GM23248 (cell line): ENCODE measurements at regions of chr1 and their contacts with region 1.

Region 1: GRCh38 chr1:15430787-15431570 is 7.3 kb upstream of the CTRC start:
- DNase-seq: peak; percentile 46
- H3K4me3 ChIP-seq: no peak overlapping the region
- H3K27ac ChIP-seq: no peak overlapping the region
- H3K4me1 ChIP-seq: peaks cover 10% of the 10 kb centered on the region
- H3K27me3 ChIP-seq: no peaks in the 10 kb centered on the region

Region 2: GRCh38 chr1:14778898-14779865 is 651.8 kb before region 1 on chr1:
- in situ Hi-C with region 1: no loop called
- DNase-seq: peak; percentile 48
- H3K4me3 ChIP-seq: no peak overlapping the region
- H3K27ac ChIP-seq: no peak overlapping the region
- H3K4me1 ChIP-seq: peaks cover 12% of the 10 kb centered on the region; the same call in 1 of the 2 replicates
- H3K27me3 ChIP-seq: 0 out of 2 replicates have a peak, but pooled peaks cover 5% of the 10 kb centered on the region

Region 3: DNA sequence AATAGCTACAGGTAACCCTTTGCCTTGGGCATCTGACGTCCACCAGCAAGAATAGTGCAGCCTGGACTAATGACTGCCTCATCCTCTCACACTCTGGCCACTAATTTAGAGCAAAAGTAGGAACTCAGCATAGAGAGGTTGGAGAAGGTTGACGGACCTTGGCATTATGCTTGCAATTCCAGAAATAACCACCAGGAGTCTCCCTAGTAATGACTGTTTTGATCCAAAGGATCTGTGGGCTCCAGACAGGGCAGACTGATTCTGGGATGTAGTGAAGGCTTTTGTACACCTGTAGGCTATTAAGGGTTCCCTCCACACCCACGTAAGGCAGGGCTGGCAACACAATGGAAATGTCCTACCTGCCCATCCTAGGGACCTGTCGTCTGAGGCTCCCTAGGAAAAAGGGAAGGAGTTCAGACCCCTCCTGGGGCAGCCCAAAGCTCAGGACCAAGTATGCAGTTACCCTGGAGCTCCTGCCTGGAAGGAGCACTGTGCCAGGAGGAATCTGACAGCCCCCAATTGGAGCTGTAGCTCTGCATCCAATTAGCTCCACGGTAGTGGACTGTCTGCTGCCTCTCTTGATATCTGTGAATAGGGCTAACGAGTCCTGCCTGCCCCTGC is 368.4 kb before region 1 on chr1:
- in situ Hi-C with region 1: no loop called
- DNase-seq: no peak
- H3K4me3 ChIP-seq: no peak overlapping the region
- H3K27ac ChIP-seq: no peak overlapping the region
- H3K4me1 ChIP-seq: no peaks in the 10 kb centered on the region
- H3K27me3 ChIP-seq: no peaks in the 10 kb centered on the region

Region 4: DNA sequence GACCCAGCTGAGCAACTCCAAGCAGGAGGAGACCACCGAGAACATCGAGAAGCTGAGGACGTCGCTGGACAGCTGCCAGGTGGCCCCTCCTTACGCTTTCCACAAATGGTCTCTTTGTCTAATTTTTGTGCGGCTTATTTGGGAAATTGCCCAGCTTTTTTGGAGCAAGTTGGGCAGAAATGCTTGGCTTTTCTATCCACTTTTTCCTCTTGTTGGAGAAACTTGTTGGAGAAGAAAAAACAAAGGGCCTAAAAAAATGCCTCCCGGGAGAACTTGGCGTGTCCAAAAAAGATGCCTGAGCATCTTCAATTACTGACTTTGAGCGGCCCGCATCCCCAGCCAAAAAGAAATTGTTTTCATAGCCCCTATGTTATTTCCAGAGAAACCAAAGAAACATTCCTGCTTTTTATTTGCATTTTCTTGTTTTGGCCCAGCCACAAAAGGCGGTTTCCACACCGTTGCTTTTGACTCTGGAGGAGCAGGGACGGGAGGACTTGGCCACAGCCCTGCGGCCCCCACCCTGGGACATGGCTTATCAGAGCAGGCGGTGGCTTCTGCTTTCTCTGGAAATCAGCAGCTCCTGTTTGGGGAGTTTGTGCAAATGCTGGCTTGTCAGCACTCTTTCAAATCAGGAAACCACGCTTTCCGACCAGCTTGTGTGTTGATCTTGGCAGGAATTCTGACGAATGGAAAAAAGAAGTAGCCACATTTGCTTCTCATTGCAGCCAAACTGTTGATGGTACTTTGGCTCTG is 102.5 kb before region 1 on chr1:
- in situ Hi-C with region 1: loop called (anchors 5 kb)
- DNase-seq: peak; percentile 76
- H3K4me3 ChIP-seq: peak overlapping the region; percentile 36
- H3K27ac ChIP-seq: no peak overlapping the region
- H3K4me1 ChIP-seq: peaks cover 24% of the 10 kb centered on the region
- H3K27me3 ChIP-seq: no peaks in the 10 kb centered on the region

Region 5: GRCh38 chr1:15384301-15384901 is 46.6 kb before region 1 on chr1:
- in situ Hi-C with region 1: no loop called
- DNase-seq: no peak
- H3K4me3 ChIP-seq: no peak overlapping the region
- H3K27ac ChIP-seq: no peak overlapping the region
- H3K4me1 ChIP-seq: peaks cover 9% of the 10 kb centered on the region; the same call in 1 of the 2 replicates
- H3K27me3 ChIP-seq: no peaks in the 10 kb centered on the region